Activated CD4-positive, alpha-beta T cell treated with anti-CD3 and anti-CD28 coated beads for 36 hours (primary cell): ENCODE measurements at regions of chr4 and their contacts with region 1.

Region 1: GRCh38 chr4:105191621-105192210 is 45.0 kb downstream of the TET2 start:
- DNase-seq: peak; percentile 11
- ATAC-seq: peak; percentile 70
- H3K4me3 Mint-ChIP-seq: peak overlapping the region; percentile 12
- H3K27ac Mint-ChIP-seq: peak overlapping the region; percentile 90
- H3K4me1 Mint-ChIP-seq: peaks cover 94% of the 10 kb centered on the region
- H3K27me3 Mint-ChIP-seq: no peaks in the 10 kb centered on the region

Region 2: DNA sequence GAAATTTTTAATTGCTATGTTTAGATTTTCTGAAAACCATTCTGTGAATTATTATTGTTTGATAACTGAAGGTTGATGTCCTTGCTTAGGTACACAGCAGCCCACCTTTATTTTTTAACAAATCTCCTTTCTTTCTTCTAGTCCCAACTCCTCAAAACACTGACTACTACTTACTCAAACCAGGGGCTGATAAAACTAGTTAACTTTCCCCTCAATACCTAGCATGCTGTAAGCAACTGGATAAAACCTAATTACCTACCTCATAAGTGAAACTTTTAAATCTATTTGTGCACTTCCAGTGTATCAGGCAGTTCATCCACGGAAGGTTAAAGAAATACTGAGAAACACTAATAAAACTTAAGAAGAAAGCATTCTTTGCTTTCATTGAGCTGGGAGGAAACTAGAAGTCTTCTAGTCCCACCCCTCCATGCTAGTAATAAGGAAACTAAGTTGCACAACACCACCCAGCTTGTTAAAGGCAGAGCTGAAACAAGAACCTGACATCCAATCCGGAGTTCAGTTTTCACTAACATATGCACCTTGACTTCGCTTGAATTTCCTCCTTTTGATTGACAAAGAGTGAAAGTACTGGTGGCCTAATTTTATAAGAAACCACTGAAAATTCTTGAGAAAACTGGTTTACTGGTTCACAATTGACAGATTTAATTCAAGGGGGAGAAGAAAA is 225.2 kb before region 1 on chr4:
- CTCF ChIA-PET with region 1: no interaction called
- POLR2A ChIA-PET with region 1: no interaction called
- intact Hi-C with region 1: loop called in 1 of 2 experiments (anchors 10 kb)
- DNase-seq: peak; percentile 61
- ATAC-seq: peak; percentile 97
- H3K4me3 Mint-ChIP-seq: peak overlapping the region; percentile 43
- H3K27ac Mint-ChIP-seq: peak overlapping the region; percentile 98
- H3K4me1 Mint-ChIP-seq: peaks cover 18% of the 10 kb centered on the region
- H3K27me3 Mint-ChIP-seq: peaks cover 5% of the 10 kb centered on the region

Region 3: GRCh38 chr4:105036991-105037390 is 154.7 kb before region 1 on chr4:
- CTCF ChIA-PET with region 1: no interaction called
- POLR2A ChIA-PET with region 1: no interaction called
- intact Hi-C with region 1: no loop called
- DNase-seq: no peak
- ATAC-seq: no peak
- H3K4me3 Mint-ChIP-seq: no peak overlapping the region
- H3K27ac Mint-ChIP-seq: no peak overlapping the region
- H3K4me1 Mint-ChIP-seq: no peaks in the 10 kb centered on the region
- H3K27me3 Mint-ChIP-seq: peaks cover 4% of the 10 kb centered on the region

Region 4: GRCh38 chr4:105215609-105216313 is 24.0 kb after region 1 on chr4:
- CTCF ChIA-PET with region 1: interaction called, 5 read pairs
- POLR2A ChIA-PET with region 1: no interaction called
- intact Hi-C with region 1: loop called (anchors 1 kb)
- DNase-seq: no peak
- ATAC-seq: peak; percentile 95
- H3K4me3 Mint-ChIP-seq: peak overlapping the region; percentile 20
- H3K27ac Mint-ChIP-seq: peak overlapping the region; percentile 78
- H3K4me1 Mint-ChIP-seq: peaks cover 49% of the 10 kb centered on the region
- H3K27me3 Mint-ChIP-seq: no peaks in the 10 kb centered on the region

Region 5: DNA sequence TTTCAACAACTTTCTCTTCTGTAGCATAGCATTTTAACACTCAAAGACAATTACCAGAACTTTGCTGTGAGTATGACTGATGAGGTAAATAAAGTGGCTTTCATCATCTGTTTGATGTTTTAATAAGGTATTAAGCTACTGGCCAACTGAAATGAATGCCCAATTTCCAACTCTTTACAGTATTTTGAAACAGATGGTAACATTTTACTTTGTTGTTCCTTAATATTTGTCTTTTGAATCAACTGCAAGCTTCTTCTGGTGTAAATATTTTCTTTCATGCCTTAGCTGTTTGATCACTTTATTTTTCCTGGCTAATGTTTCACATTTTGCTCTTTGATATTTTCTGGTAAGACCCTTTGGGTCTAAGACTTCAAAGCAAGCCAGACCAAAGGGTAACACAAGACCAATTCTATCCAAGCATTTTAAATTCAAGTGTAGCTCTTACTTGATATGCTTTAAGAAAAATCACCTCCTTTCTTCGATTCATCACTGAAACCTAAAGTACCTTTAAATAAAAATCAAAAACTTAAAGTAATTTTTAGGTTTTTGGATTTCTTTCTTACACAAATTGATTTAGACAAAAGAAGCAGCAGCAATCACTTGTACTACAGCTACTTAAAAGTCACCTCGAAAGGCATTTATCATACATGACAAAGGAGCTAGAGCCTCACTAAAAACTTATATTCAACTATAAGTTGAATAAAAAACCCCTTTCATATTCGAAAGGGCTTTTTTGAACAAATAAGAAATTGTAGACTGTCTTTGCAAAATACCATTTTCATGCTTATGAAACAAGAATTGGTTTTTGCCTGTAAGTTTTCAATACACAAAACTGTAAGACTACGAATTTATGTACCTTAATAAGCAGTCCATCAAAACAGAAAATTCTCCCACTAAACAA is 1066.7 kb after region 1 on chr4:
- CTCF ChIA-PET with region 1: no interaction called
- POLR2A ChIA-PET with region 1: no interaction called
- intact Hi-C with region 1: no loop called
- DNase-seq: no peak
- ATAC-seq: no peak
- H3K4me3 Mint-ChIP-seq: no peak overlapping the region
- H3K27ac Mint-ChIP-seq: no peak overlapping the region
- H3K4me1 Mint-ChIP-seq: no peaks in the 10 kb centered on the region
- H3K27me3 Mint-ChIP-seq: no peaks in the 10 kb centered on the region